ENCODE measurements at regions of chr3 and their contacts with region 1.

Region 1: DNA sequence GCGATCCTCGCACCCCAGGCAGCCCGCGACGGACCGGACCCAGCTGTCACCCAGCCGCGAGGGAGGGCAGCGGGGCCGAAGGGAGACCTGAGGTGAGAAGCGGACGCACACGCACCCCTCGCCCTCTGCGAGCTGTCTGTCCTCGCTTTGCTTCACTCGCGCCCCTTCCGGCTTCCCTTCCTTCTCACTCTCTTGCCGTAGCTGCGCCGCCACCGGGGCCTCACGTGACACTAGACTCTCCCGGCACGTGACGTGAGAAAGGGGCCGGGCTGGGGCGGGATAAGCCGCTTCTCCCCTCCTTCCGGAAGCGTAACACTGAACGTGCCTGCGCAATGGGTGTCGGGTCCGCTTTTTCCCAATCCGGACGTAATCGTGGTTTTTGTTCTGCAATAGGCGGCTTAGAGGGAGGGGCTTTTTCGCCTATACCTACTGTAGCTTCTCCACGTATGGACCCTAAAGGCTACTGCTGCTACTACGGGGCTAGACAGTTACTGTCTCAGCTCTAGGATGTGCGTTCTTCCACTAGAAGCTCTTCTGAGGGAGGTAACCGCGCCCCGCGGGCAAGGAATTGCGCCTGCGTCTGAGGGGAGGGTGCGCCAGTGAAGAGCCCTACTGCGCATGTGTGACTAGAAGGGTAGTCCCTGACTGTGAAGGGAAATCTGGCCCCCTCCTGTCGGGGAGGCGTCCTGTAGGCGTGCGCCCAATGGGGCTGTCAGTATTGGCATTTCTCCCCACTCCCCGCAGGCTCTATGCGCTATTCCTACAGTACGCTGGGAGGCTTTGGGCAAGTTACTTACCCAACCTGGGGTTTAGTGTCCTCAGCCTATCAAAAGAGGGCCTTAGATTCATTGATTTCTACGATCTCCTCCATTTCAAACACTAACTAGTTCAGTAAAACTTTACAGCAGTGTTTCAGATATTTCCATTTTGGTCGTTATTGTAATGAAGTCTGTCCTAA is at the starts of genes ATG3 and SLC35A5:
- DNase-seq: peak; percentile 98
- H3K4me3 Mint-ChIP-seq: peak within 1 kb of the TSS; percentile 93
- H3K27ac Mint-ChIP-seq: peak within 1 kb of the TSS; percentile 99
- H3K4me1 Mint-ChIP-seq: peaks cover 31% of the 10 kb centered on the region
- H3K27me3 Mint-ChIP-seq: no peaks in the 10 kb centered on the region
- total RNA-seq, gene ATG3: 66.2 and 69.8 TPM in 2 replicates
- total RNA-seq, gene SLC35A5: 14.9 and 15.5 TPM in 2 replicates

Region 2: GRCh38 chr3:111547631-111548030 is 1014.4 kb before region 1 on chr3:
- intact Hi-C with region 1: loop called (anchors 5 kb)
- DNase-seq: peak; percentile 48
- H3K4me3 Mint-ChIP-seq: no peak overlapping the region
- H3K27ac Mint-ChIP-seq: no peak overlapping the region
- H3K4me1 Mint-ChIP-seq: peaks cover 25% of the 10 kb centered on the region
- H3K27me3 Mint-ChIP-seq: no peaks in the 10 kb centered on the region

Region 3: DNA sequence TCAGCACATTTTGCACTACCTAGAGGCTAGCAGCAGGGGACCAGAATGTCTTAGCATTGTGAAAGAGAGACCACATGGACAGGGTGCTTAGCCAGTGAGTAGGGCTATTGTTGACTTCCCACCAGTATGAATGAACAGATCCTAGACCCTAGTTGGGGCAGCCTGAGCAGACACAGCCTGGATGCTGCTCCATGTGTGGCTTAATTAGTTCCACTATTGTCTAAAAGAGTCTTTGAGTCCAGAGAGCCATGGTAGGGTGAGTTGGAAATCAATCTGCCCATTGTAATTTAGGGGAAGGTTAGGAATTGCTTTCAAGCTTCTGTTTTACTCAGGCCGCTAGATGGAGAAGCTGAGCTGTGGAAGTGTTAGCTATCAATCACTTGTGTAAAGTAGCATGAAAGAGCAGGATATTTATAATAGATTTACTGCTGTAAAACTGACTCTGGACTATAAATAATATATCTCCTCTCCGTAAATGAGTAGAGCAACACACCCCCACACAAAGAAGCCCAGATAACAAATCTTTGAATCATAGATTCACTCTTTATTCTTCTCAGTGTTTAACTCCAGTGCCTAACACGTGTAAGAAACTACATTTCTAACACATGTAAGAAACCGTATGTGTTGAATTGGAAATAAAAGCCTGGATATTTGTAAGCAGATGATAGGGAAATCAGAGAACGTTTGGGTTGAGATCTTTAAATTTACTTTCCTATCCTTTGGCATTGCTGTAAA is 424.9 kb before region 1 on chr3:
- intact Hi-C with region 1: loop called (anchors 2 kb)
- DNase-seq: no peak
- H3K4me3 Mint-ChIP-seq: no peak overlapping the region
- H3K27ac Mint-ChIP-seq: peak overlapping the region; percentile 6
- H3K4me1 Mint-ChIP-seq: peaks cover 54% of the 10 kb centered on the region
- H3K27me3 Mint-ChIP-seq: no peaks in the 10 kb centered on the region

Region 4: DNA sequence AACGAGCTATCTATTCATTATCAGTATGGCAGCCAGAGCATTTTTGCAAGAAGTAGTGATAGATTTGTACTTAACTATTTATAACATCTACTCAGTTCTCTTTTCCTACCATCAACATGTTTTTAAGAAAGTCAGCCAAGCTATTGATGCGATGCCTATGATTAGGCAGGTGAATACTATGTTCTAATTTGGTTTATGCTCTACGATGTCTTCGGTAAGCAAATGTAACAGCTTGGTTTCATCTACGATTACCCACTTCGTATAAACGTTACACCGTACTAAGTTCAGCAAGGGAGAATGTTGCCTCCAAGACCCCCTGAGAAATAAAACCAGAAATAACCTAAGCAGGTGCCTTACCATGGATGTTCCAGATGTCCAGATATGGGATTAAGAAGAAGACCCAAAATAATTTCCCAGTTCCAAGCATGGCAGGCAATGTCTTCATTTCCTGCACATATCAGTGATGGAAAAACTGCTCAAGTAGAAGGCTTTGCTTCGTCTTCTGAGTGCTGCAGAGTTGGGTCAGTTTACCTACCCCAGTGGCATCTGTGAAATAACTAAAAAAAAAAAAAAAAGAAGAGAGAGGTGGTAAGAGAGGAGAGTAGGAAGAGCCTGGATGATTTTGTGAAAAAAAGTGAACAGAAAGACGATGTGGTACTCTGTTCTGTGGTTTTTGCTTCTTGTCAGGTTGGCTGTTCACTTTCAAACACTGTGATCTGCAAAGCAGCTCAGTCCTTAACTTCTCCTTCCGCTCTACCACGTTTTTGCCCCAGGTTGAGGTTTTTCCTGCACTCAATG is 62.9 kb before region 1 on chr3 and contains the start of gene BTLA:
- intact Hi-C with region 1: loop called (anchors 2 kb)
- DNase-seq: peak; percentile 35
- H3K4me3 Mint-ChIP-seq: peak within 1 kb of the TSS; percentile 95
- H3K27ac Mint-ChIP-seq: peak within 1 kb of the TSS; percentile 97
- H3K4me1 Mint-ChIP-seq: peaks cover 67% of the 10 kb centered on the region
- H3K27me3 Mint-ChIP-seq: no peaks in the 10 kb centered on the region
- total RNA-seq, gene BTLA: 39.4 and 40.7 TPM in 2 replicates

Region 5: DNA sequence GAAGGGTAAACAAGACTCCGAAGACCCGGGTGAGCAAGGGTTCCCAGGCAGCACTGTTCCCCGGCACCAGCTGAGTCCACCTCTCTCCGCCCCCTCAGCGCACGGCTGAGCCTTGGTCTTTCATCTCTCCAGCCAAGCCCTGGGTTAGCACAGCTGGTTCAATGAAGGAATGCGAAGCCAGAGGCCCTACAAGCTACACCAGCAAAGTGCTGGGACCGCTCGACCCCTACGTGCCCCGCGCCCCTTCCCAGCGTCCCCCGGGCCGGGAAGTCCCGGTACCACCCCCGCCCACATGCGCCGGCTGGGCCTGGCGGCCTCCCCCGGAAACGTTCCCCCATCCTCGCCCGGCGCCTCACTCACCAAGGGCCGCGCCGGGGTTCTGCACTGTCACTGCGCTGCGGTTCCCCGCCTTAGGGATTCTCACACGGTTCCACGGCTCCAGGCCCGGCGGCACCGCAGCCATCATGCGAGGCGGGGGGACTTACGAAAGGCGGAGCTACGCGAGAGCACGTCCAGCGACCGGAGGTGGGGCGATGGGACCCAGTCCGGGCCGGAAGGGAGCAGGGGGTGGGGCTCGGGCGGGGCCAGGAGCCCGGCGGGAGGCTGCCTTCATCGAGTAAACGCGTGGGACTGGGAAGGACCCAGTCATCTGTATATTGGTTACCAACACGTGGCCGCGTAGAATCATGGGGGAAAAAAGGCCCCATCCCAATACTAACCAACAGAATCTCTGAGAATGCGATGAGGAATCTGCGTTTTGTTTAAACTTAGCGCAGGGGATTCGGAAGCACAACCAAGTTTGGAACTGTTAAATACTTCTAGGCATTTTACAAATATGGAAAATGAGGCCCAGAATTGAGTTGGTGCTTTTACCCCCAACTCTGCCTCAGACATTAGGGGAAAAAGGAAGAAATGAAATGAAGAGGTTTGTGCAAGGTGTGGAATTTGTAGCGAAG is 457.4 kb after region 1 on chr3:
- intact Hi-C with region 1: loop called (anchors 1 kb)
- DNase-seq: peak; percentile 77
- H3K4me3 Mint-ChIP-seq: peak overlapping the region; percentile 91
- H3K27ac Mint-ChIP-seq: peak overlapping the region; percentile 89
- H3K4me1 Mint-ChIP-seq: peaks cover 58% of the 10 kb centered on the region
- H3K27me3 Mint-ChIP-seq: no peaks in the 10 kb centered on the region

Region 6: GRCh38 chr3:113696658-113697499 is 1134.9 kb after region 1 on chr3:
- intact Hi-C with region 1: loop called (anchors 1 kb)
- DNase-seq: peak; percentile 99
- H3K4me3 Mint-ChIP-seq: no peak overlapping the region
- H3K27ac Mint-ChIP-seq: no peak overlapping the region
- H3K4me1 Mint-ChIP-seq: peaks cover 20% of the 10 kb centered on the region
- H3K27me3 Mint-ChIP-seq: no peaks in the 10 kb centered on the region